ENCODE measurements at regions of chr10 and their contacts with region 1.

Region 1: DNA sequence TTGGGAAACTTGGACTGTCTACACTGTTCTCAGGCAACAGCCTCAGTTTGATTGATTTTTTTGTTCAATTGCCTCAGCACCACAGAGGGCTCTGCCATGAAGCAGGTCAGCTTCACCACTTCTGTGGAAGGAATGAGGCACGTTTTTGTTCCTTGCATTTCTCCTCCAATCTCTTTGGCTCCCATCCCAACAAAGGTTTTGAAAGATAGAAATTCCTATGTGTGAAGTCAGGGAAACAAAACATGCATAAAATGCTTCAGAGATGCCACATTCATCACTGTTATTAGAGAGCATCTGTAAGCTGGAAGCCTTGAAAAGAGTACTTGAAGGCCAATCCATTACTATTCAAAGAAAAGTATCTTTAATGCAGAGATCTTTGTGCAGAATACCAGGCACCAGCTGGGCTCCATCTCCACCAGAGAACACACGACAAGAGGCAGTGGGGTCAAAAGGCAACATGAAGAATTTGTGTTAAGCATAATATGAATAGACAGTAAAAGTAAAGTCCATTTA is 249.1 kb upstream of the LYZL1 start:
- DNase-seq: no peak
- ATAC-seq: no peak

Region 2: GRCh38 chr10:28381903-28382347 is 657.8 kb before region 1 on chr10:
- intact Hi-C with region 1: no loop called
- DNase-seq: peak; percentile 92
- ATAC-seq: peak; percentile 94

Region 3: GRCh38 chr10:29096303-29096824 is 56.6 kb after region 1 on chr10:
- intact Hi-C with region 1: loop called (anchors 2 kb)
- DNase-seq: no peak
- ATAC-seq: no peak

Measured in sciatic nerve (tissue), 2 donors.